ENCODE measurements at regions of chr3 and their contacts with region 1.

Region 1: GRCh38 chr3:146640955-146641867 is 36.1 kb upstream of the PLSCR5 start:
- DNase-seq: peak; percentile 51
- H3K4me3 Mint-ChIP-seq: no peak overlapping the region
- H3K27ac Mint-ChIP-seq: no peak overlapping the region
- H3K4me1 Mint-ChIP-seq: no peaks in the 10 kb centered on the region
- H3K27me3 Mint-ChIP-seq: peaks cover 24% of the 10 kb centered on the region
- CTCF ChIP-seq: peak; percentile 57

Region 2: GRCh38 chr3:146334151-146334550 is 307.1 kb before region 1 on chr3:
- CTCF ChIA-PET with region 1: interaction called, 4 read pairs
- POLR2A ChIA-PET with region 1: no interaction called
- intact Hi-C with region 1: loop called (anchors 5 kb)
- DNase-seq: peak; percentile 45
- H3K4me3 Mint-ChIP-seq: no peak overlapping the region
- H3K27ac Mint-ChIP-seq: no peak overlapping the region
- H3K4me1 Mint-ChIP-seq: no peaks in the 10 kb centered on the region
- H3K27me3 Mint-ChIP-seq: no peaks in the 10 kb centered on the region
- CTCF ChIP-seq: peak; percentile 23

Region 3: GRCh38 chr3:146536696-146537095 is 104.5 kb before region 1 on chr3:
- CTCF ChIA-PET with region 1: no interaction called
- POLR2A ChIA-PET with region 1: no interaction called
- intact Hi-C with region 1: no loop called
- DNase-seq: no peak
- H3K4me3 Mint-ChIP-seq: no peak overlapping the region
- H3K27ac Mint-ChIP-seq: peak overlapping the region; percentile 12
- H3K4me1 Mint-ChIP-seq: peaks cover 36% of the 10 kb centered on the region
- H3K27me3 Mint-ChIP-seq: no peaks in the 10 kb centered on the region
- CTCF ChIP-seq: no peak

Region 4: GRCh38 chr3:146589899-146590508 is 51.2 kb before region 1 on chr3:
- CTCF ChIA-PET with region 1: interaction called, 38 read pairs
- POLR2A ChIA-PET with region 1: no interaction called
- intact Hi-C with region 1: loop called (anchors 1 kb)
- DNase-seq: peak; percentile 55
- H3K4me3 Mint-ChIP-seq: no peak overlapping the region
- H3K27ac Mint-ChIP-seq: no peak overlapping the region
- H3K4me1 Mint-ChIP-seq: no peaks in the 10 kb centered on the region
- H3K27me3 Mint-ChIP-seq: no peaks in the 10 kb centered on the region
- CTCF ChIP-seq: peak; percentile 52

Region 5: DNA sequence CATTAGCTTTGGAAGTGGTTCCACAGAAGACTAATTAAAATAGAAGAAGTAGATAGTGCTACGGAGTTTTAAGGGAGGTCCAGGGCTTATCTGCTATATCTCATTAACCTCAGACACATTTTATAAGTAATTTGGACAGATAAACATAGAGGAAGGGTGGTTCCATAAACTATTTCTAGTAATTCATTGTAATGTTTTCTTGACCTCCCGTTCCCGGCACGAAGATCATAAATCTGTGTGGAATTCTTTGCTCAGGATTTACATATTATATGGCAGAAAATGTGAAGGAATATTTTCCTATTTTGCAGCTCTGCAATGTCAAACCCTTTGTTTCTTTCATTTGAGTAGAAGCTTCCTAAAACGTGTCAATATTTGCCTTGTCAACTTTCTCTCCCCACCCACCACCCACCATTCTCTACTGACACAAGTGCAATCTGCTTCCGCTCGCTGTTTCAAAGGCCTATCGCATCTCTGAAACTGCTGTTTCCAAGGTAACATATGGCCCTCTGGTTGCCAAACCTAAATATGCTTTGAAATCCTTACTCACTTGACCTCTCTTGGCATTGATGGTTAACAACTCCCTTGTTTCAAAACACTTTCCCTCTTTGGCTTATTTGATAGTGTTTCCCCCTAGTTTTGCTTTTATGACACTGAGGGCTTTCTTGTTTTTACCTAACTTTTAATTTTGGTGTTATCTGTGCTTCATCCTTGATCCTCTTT is 14.6 kb before region 1 on chr3:
- CTCF ChIA-PET with region 1: interaction called, 15 read pairs
- POLR2A ChIA-PET with region 1: no interaction called
- intact Hi-C with region 1: no loop called
- DNase-seq: no peak
- H3K4me3 Mint-ChIP-seq: no peak overlapping the region
- H3K27ac Mint-ChIP-seq: no peak overlapping the region
- H3K4me1 Mint-ChIP-seq: no peaks in the 10 kb centered on the region
- H3K27me3 Mint-ChIP-seq: peaks cover 36% of the 10 kb centered on the region
- CTCF ChIP-seq: no peak

Region 6: DNA sequence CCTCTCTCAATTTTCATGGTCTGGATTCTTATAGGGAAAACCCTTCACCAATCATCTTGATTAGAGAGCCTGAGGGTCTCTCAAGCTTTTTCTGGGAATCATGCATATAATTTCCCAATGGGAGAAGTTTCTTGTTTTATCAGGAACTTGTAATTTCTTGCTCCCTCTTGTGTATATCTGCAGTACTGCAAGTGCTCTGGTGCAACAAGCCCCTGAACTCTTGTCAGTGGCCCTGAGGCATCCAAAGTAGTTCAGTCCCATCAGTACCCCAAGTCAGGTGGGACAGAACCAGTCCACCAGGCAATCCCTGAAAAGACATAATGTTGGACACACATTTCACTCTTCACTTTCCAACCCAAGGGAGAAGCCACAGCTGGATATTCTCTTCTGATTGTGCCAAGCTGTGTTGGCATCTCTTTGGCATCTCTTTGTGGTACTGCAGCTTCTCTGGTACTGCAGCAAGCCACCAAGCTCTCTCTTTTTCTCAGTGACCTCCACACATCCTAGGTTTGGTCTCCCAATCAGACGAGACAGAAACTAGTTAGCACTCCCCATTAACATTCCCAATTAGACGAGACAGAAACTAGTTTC is 550.7 kb after region 1 on chr3:
- CTCF ChIA-PET with region 1: interaction called, 3 read pairs
- POLR2A ChIA-PET with region 1: no interaction called
- intact Hi-C with region 1: loop called (anchors 1 kb)
- DNase-seq: peak; percentile 61
- H3K4me3 Mint-ChIP-seq: no peak overlapping the region
- H3K27ac Mint-ChIP-seq: no peak overlapping the region
- H3K4me1 Mint-ChIP-seq: no peaks in the 10 kb centered on the region
- H3K27me3 Mint-ChIP-seq: peaks cover 48% of the 10 kb centered on the region
- CTCF ChIP-seq: peak; percentile 76